ENCODE measurements at regions of chr6 and their contacts with region 1.

Region 1: GRCh38 chr6:170049641-170050561 is 241.0 kb downstream of the DLL1 start:
- DNase-seq: peak; percentile 86 to 95 (median 91)
- H3K4me3 ChIP-seq: peak overlapping the region in 1 of 3 experiments; percentile 40
- H3K4me3 Mint-ChIP-seq: peak overlapping the region; percentile 48 to 50
- H3K27ac ChIP-seq: peak overlapping the region; percentile 81 to 98
- H3K27ac Mint-ChIP-seq: peak overlapping the region; percentile 91 to 100 (median 97)
- H3K4me1 ChIP-seq: peaks cover 46 to 52% of the 10 kb centered on the region in 2 donors
- H3K4me1 Mint-ChIP-seq: peaks cover 50% of the 10 kb centered on the region
- H3K27me3 ChIP-seq: no peaks in the 10 kb centered on the region
- H3K27me3 Mint-ChIP-seq: peaks cover 0 to 4% (median 2%) of the 10 kb centered on the region in 3 donors
- CTCF ChIP-seq: no peak

Region 2: GRCh38 chr6:169990095-169991030 is 59.5 kb before region 1 on chr6:
- intact Hi-C with region 1: loop called (anchors 2 to 5 kb)
- DNase-seq: peak; percentile 93 to 97 (median 95)
- H3K4me3 ChIP-seq: peak overlapping the region in 1 of 3 experiments; percentile 49
- H3K4me3 Mint-ChIP-seq: peak overlapping the region; percentile 45 to 83
- H3K27ac ChIP-seq: peak overlapping the region; percentile 67 to 74
- H3K27ac Mint-ChIP-seq: peak overlapping the region; percentile 76 to 90 (median 86)
- H3K4me1 ChIP-seq: peaks cover 33 to 37% of the 10 kb centered on the region in 2 donors
- H3K4me1 Mint-ChIP-seq: peaks cover 33% of the 10 kb centered on the region
- H3K27me3 ChIP-seq: no peaks in the 10 kb centered on the region
- H3K27me3 Mint-ChIP-seq: peaks cover 1 to 10% (median 4%) of the 10 kb centered on the region in 3 donors
- CTCF ChIP-seq: peak; percentile 68

Region 3: GRCh38 chr6:170306324-170307079 is 256.6 kb after region 1 on chr6 and contains the start of gene FAM120B:
- intact Hi-C with region 1: loop called in 1 of 2 experiments (anchors 5 kb)
- DNase-seq: peak; percentile 96 to 98 (median 97)
- H3K4me3 ChIP-seq: peak within 1 kb of the TSS; percentile 79 to 89 (median 83)
- H3K4me3 Mint-ChIP-seq: peak within 1 kb of the TSS; percentile 89 to 99
- H3K27ac ChIP-seq: peak within 1 kb of the TSS; percentile 90 to 99
- H3K27ac Mint-ChIP-seq: peak within 1 kb of the TSS; percentile 96 to 99 (median 99)
- H3K4me1 ChIP-seq: peaks cover 24 to 28% of the 10 kb centered on the region in 2 donors
- H3K4me1 Mint-ChIP-seq: peaks cover 45% of the 10 kb centered on the region
- H3K27me3 ChIP-seq: peaks cover 4 to 5% of the 10 kb centered on the region in 2 donors
- H3K27me3 Mint-ChIP-seq: peaks cover 12 to 19% (median 18%) of the 10 kb centered on the region in 3 donors
- CTCF ChIP-seq: no peak
- polyA plus RNA-seq, gene FAM120B: 10.6 to 20.2 (median 11.2) TPM

Measured in CD14-positive monocyte (primary cell).